ENCODE measurements at regions of chr1 and their contacts with region 1.

Region 1: GRCh38 chr1:201625226-201625761 is 86.4 kb downstream of the NAV1 start:
- DNase-seq: peak; percentile 92
- H3K4me3 ChIP-seq: no peak overlapping the region
- H3K27ac ChIP-seq: peak overlapping the region; percentile 66
- H3K27me3 ChIP-seq: no peaks in the 10 kb centered on the region
- CTCF ChIP-seq: peak; percentile 42

Region 2: DNA sequence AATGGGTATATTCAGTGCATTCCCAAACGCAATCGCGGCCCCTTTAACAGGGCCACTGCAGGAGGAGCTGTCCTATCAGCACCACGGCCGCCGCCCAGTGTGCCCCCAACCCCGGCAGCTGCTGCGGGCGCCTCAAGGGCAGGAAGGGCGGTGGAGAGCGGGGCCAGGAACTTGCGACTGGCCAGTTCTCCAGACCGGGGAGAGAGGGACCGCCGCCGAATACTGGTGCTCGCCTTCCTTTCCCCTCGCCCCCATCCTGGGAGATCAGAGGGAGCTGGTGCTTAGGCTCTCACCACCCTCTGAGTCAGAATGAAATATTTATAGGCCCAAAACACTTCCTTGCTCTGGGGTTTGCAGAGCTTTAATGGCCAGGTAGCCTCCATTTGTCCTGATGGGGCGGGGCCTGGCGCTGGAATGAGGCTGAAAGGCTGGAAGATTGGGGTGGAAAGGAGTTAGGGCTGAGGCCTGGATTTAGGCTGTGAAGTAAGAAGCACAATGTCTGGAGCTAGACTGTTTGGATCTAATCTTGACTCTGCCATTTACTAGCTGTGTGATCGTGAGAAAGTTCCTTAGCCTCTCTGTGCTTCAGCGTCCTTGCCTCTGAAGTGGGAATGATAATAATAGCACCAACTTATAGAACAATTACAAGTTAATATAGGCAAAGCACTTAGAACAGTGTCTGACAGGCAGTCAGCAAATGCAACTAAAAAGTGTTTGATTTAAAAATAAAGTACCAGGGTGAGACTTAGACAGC is 10.9 kb before region 1 on chr1:
- CTCF ChIA-PET with region 1: no interaction called
- POLR2A ChIA-PET with region 1: no interaction called
- DNase-seq: no peak
- H3K4me3 ChIP-seq: no peak overlapping the region
- H3K27ac ChIP-seq: no peak overlapping the region
- H3K27me3 ChIP-seq: no peaks in the 10 kb centered on the region
- CTCF ChIP-seq: no peak

Region 3: DNA sequence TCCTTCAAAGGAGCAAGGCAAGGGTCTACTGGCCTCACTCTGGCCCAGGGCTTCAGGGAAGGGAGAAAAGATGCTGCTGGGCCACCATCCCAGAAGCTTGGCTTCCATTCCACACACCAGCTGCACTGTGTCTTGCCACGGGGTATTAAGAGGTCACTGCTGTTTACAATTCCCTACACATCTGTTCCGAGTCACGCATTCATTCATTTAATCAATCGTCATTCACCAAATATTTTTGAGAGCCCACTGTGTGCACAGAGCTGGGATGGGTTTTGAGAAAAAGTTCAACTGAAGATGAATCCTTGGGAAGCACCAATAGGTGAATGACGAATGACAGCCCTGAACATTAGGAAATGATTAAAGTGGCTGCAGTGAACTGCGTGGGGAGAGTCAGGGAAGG is 15.3 kb after region 1 on chr1:
- CTCF ChIA-PET with region 1: no interaction called
- POLR2A ChIA-PET with region 1: interaction called, 16 read pairs
- DNase-seq: peak; percentile 87
- H3K4me3 ChIP-seq: no peak overlapping the region
- H3K27ac ChIP-seq: peak overlapping the region; percentile 85
- H3K27me3 ChIP-seq: no peaks in the 10 kb centered on the region
- CTCF ChIP-seq: no peak

Measured in AG04450 (cell line).